ENCODE measurements at regions of chr13 and their contacts with region 1.

Region 1: DNA sequence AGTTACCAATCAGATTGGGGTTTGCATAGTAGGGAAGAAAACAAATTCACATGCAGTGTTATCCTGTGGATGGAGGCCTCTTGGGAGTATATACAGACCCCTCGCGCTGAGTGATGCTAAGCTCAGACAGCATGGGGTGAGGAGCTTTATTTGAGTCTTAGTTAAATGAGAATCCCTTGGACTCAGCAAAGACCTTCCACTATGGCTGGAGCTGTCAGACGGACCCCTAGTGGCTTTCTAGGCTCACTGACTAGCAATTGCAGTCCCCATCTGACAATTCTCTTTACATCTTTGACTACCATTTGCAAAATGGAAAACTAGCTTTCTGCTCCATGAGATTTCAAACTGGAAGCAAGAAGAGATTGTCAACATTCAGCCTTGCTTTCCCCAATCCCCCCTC is 90.4 kb downstream of the STOML3 start:
- DNase-seq: no peak
- H3K4me3 ChIP-seq: no peak overlapping the region
- H3K27ac ChIP-seq: no peak overlapping the region
- H3K4me1 ChIP-seq: no peaks in the 10 kb centered on the region
- H3K27me3 ChIP-seq: no peaks in the 10 kb centered on the region
- CTCF ChIP-seq: no peak
- POLR2A ChIP-seq: no peak

Region 2: GRCh38 chr13:38483623-38484022 is 416.6 kb before region 1 on chr13:
- intact Hi-C with region 1: loop called (anchors 10 kb)
- DNase-seq: no peak
- H3K4me3 ChIP-seq: no peak overlapping the region
- H3K27ac ChIP-seq: no peak overlapping the region
- H3K4me1 ChIP-seq: no peaks in the 10 kb centered on the region
- H3K27me3 ChIP-seq: no peaks in the 10 kb centered on the region
- CTCF ChIP-seq: no peak
- POLR2A ChIP-seq: no peak

Region 3: DNA sequence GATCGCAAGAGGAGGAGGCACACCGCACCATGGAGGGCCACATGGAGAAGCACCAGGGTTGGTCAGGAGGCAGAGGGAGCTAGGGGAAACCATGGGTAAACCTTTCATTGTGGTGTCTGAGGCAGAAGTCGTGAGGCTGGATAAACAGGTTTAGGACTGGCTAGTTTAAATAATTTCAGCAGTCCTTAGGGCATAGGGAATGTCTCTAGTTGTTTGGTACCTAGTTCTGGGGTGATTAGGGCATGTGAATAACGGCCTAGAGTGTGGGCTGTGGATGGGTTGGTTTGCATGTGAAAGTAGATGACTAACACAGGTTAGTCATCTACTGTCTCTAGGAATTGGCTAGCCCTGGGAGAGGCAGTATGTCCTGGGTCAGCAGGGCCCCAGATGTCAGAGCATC is 11.9 kb before region 1 on chr13:
- intact Hi-C with region 1: loop called (anchors 1 kb)
- DNase-seq: no peak
- H3K4me3 ChIP-seq: no peak overlapping the region
- H3K27ac ChIP-seq: no peak overlapping the region
- H3K4me1 ChIP-seq: no peaks in the 10 kb centered on the region
- H3K27me3 ChIP-seq: no peaks in the 10 kb centered on the region
- CTCF ChIP-seq: no peak
- POLR2A ChIP-seq: no peak

Measured in vagina (tissue), 2 donors.